Activated B cell treated with CpG ODN at 0.5 μM for 24 hours (primary cell): ENCODE measurements at regions of chr1 and their contacts with region 1.

Region 1: DNA sequence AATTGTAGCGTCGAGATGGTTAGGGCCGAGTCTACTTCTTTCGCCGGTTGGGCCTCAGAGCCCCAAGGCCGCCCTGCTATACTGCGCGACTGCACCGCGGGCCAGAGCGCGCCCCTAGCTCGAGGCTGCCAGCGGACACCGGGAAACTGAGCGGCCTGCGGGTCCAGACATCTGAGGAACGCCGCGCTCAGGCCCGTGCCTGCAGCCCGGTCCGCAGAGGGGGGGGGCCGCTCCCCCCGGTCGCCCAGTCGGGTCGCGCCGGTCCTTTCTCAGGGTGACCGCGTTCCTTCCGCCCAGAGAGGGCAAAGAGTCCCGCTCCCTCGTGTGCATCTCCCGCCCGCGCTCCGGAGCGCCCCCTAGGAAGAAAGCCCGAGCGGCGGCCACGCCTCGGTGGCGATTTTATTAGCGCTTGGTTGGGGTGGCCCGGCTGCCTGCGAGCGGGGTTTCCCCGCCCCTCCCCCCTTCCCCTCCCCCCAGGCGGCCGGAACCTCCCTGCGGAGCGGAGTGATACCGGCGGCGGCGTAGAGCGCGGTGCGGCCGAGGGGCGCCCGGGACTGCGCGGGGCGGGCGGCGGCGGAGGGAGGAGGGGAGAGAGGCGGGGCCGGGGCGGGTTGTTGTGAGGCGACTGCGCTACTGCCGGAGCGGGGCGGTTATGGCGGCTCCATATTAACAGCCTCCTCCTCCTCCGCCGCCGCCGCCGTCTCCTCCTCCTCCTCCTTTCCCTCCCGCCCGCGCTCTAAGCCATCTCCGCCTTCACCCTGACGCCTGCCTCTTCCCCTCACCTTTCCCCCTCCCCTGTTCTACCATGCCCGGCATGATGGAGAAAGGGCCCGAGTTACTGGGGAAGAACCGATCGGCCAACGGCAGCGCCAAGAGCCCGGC is at the start of gene RCOR3:
- DNase-seq: peak; percentile 86
- ATAC-seq: peak; percentile 75
- H3K4me3 Mint-ChIP-seq: peak within 1 kb of the TSS; percentile 93
- H3K27ac Mint-ChIP-seq: peak within 1 kb of the TSS; percentile 97
- H3K4me1 Mint-ChIP-seq: peaks cover 20% of the 10 kb centered on the region
- H3K27me3 Mint-ChIP-seq: no peaks in the 10 kb centered on the region
- CTCF ChIP-seq: peak; percentile 59
- total RNA-seq, gene RCOR3: 59.3 and 72.3 TPM in 2 replicates

Region 2: GRCh38 chr1:209827384-209828262 is 1431.4 kb before region 1 on chr1 and contains the start of gene UTP25:
- CTCF ChIA-PET with region 1: no interaction called
- POLR2A ChIA-PET with region 1: no interaction called
- intact Hi-C with region 1: loop called (anchors 1 kb)
- DNase-seq: peak; percentile 85
- ATAC-seq: peak; percentile 91
- H3K4me3 Mint-ChIP-seq: peak within 1 kb of the TSS; percentile 97
- H3K27ac Mint-ChIP-seq: peak within 1 kb of the TSS; percentile 92
- H3K4me1 Mint-ChIP-seq: peaks cover 33% of the 10 kb centered on the region
- H3K27me3 Mint-ChIP-seq: peaks cover 7% of the 10 kb centered on the region
- CTCF ChIP-seq: no peak
- total RNA-seq, gene UTP25: 13.3 and 15.4 TPM in 2 replicates

Region 3: DNA sequence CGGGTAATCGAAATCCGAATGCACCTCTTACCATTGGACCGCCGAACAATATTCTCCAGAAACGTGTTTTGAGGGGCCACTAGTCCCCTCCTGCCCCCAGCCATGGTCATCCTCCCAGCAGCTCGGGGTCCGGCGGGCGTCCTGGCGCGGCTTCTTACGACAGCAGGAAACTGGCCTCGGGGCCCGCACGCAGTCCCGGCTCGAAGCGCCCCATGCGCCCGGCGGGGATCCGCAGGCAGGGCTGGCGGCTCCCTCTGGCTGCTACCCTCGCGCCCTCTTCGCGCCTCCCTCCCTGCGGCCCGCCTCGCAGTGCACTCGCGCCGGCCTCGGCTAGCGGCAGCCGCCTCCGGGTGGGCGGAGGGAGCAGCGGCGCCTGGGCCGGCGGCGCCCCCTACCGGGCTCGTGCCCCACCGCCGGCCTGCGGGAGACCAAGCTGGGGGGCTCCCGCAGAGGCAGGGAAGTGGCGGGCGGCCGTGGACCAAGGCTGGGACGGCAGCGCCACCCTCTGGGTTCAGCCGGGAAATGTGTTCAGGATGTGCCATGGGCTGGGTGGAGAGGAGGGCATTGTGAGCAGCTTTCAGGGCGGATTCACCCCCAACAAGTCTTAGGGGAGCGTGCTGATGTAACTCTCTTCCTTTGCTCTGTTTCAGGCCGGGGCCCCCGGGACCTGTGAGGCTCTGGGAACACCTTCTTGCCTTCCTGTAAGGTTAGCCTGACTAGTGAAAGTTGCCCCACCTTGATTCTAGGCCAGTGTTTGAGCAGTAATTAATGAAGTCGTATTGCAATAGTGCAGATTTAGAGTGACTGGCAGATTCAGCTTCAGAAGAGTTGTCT is 124.9 kb before region 1 on chr1 and contains the start of gene KCNH1:
- CTCF ChIA-PET with region 1: interaction called, 3 read pairs
- POLR2A ChIA-PET with region 1: interaction called, 5 read pairs
- intact Hi-C with region 1: loop called (anchors 1 kb)
- DNase-seq: peak; percentile 59
- ATAC-seq: peak; percentile 87
- H3K4me3 Mint-ChIP-seq: peak within 1 kb of the TSS; percentile 67
- H3K27ac Mint-ChIP-seq: no peak within 1 kb of the TSS
- H3K4me1 Mint-ChIP-seq: peaks cover 7% of the 10 kb centered on the region
- H3K27me3 Mint-ChIP-seq: peaks cover 55% of the 10 kb centered on the region
- CTCF ChIP-seq: no peak
- total RNA-seq, gene KCNH1: not detected in 2 replicates

Region 4: DNA sequence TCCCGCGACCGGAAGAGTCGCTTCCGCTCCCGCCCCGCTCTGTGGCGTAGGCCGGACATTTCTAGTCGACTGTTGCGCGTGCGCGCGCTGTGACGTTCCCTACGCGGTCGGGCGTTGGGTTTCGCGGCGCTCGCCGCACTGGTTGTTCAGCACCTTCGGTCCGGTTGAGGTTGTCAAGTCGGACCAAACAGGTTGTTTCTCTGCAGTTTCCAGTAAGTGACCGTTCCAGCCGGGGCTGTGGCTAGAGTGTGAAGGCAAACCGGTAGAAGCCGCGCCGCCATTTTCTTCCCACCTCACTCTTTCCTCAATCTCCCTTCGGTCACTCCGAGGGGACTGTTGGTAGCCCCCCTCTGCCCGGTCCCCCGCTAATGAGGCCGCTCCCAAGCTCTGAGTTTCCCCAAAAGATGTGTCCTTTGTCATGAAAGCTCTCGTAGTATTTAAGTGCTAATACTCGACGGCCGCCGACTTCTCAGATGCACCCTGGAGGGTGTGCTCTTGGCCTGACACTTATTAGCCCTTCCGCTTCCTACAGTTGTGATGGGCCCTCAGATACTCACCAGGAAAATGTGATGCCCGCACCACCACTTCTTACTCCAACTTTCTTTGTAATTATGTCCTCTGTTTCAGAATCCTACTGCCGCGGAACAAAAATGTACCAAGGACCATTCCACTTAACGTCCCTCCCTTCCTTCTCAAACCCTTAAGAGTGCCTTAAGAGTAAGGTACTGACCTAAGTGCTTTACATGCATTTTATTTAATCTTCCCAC is 123.9 kb after region 1 on chr1:
- CTCF ChIA-PET with region 1: no interaction called
- POLR2A ChIA-PET with region 1: interaction called, 9 read pairs
- intact Hi-C with region 1: loop called (anchors 1 kb)
- DNase-seq: peak; percentile 86
- ATAC-seq: peak; percentile 96
- H3K4me3 Mint-ChIP-seq: peak overlapping the region; percentile 93
- H3K27ac Mint-ChIP-seq: peak overlapping the region; percentile 98
- H3K4me1 Mint-ChIP-seq: peaks cover 20% of the 10 kb centered on the region
- H3K27me3 Mint-ChIP-seq: no peaks in the 10 kb centered on the region
- CTCF ChIP-seq: no peak

Region 5: DNA sequence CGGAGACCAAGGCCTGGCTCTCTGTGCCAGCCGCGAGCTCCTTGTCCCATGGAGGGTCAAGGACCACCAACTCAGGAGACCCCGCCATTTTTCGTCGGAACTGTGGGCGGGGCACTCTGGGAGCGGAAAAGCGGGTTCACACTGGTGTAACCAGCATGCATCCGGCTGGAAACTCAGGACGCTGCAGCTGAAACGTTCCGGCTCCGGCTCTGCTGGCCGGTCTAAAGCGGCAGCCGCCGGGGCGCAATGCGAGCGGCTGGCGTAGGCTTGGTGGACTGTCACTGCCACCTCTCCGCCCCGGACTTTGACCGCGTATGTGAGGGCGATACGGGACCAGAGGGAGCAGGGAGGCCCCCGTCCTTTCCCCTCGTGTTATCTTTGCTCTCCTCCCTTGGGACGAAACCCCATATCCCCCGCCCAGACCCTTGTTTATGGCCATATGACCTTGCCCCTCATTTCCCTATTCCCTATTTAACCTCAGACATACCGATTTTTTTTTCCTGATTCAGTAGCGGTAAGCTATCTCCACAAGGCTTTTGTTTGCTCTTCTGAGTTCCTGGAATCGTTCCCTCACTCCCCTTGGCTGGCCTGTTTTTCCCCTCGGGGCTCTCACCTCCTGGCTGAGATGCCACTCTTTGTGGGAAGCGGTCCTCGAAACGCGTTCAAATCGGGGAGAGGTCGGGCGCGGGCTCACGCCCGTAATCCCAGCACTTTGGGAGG is 1532.8 kb after region 1 on chr1 and contains the starts of genes NSL1 and TATDN3:
- CTCF ChIA-PET with region 1: no interaction called
- POLR2A ChIA-PET with region 1: no interaction called
- intact Hi-C with region 1: loop called (anchors 5 kb)
- DNase-seq: peak; percentile 98
- ATAC-seq: peak; percentile 73
- H3K4me3 Mint-ChIP-seq: peak within 1 kb of the TSS; percentile 99
- H3K27ac Mint-ChIP-seq: peak within 1 kb of the TSS; percentile 98
- H3K4me1 Mint-ChIP-seq: peaks cover 60% of the 10 kb centered on the region
- H3K27me3 Mint-ChIP-seq: no peaks in the 10 kb centered on the region
- CTCF ChIP-seq: no peak
- total RNA-seq, gene NSL1: 34.4 and 44.5 TPM in 2 replicates
- total RNA-seq, gene TATDN3: 30.3 and 31.4 TPM in 2 replicates